ENCODE measurements at regions of chr3 and their contacts with region 1.

Region 1: DNA sequence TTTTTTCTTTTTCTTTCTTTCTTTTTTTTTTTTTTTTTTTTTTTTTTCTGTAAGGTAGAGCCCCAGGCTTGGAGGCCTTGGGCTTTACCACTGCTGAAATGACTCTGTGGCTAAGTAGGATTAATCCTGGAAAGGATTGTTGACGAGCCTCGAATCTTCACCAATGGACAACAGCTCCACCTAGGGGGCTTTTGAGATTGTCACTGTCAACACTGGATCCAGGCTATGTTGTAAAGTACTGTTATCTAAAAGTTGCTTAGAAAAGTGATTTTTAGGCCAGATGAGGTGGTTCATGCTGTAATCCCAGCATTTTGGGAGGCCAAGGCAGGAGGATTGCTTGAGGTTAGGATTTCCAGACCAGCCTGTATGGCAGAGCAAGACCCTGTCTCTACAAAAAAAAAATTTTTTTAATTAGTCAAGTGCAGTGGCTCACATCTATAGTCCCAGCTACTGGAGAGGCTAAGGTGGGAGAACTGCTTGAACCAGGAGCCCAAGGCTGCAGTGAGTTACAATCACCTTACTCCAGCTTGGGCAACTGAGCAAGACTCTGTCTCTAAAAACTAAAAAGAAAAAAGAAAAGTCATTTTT is 41.6 kb downstream of the KLHL18 start:
- DNase-seq: peak; percentile 50
- H3K4me3 ChIP-seq: no peak overlapping the region
- H3K27ac ChIP-seq: no peak overlapping the region
- H3K27me3 ChIP-seq: no peaks in the 10 kb centered on the region
- CTCF ChIP-seq: peak; percentile 80

Region 2: DNA sequence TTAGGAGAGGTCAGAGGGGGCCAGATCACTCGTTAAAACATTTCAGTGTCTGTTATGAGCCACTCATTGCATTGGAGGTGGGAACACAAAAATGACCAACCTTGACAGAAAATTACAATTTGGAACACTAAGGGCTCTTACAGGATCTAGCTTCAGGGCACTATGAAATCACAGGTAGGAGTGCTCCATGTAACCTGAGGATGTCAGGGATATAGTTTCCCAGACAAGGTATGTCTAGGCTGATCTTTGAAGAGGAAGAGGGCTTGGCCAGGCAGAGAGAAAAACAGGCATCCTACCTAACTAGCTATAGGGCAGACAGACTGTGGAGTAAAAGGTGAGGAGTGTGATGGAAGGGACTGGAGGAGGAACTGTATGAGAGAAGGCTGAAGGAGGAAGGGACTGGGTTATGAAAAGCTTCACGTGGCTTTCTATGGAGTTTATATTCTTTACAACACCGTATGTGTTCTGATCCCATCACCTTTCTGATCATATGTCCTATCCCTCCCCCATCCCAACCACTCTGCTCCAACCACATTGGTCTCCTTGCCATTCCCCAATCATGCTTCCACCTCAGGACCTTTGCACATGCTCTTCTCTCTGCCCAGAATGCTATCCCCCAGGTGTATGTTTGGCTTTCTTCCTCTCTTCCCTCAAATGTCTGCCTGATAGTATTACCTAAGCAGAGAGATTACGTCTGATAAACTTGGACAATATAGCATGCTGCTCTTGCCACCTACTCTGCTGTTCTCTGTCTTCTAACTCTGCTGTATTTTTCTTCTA is 1204.5 kb before region 1 on chr3:
- CTCF ChIA-PET with region 1: interaction called, 10 read pairs
- POLR2A ChIA-PET with region 1: no interaction called
- DNase-seq: no peak
- H3K4me3 ChIP-seq: no peak overlapping the region
- H3K27ac ChIP-seq: no peak overlapping the region
- H3K27me3 ChIP-seq: peaks cover 6% of the 10 kb centered on the region
- CTCF ChIP-seq: no peak

Region 3: GRCh38 chr3:46909535-46910442 is 414.6 kb before region 1 on chr3:
- CTCF ChIA-PET with region 1: interaction called, 10 read pairs
- POLR2A ChIA-PET with region 1: no interaction called
- DNase-seq: peak; percentile 53
- H3K4me3 ChIP-seq: no peak overlapping the region
- H3K27ac ChIP-seq: no peak overlapping the region
- H3K27me3 ChIP-seq: no peaks in the 10 kb centered on the region
- CTCF ChIP-seq: peak; percentile 96

Region 4: DNA sequence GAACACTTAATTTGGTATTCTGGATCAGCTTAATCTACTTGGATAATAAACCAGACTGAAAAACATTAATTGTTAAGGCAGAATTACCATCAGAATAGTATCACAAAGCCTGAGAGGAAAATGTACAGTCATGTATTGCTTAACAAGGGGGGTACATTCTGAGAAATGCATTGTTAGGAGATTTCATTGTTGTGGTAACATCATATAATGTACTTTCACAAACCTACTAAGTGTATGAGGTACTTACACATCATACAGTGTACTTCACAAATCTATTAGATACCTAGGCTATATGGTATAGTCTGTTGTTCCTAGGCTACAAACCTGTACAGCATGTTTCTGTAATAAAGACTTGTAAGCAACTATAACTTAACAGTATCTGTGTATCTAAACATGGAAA is 276.7 kb before region 1 on chr3:
- CTCF ChIA-PET with region 1: interaction called, 10 read pairs
- POLR2A ChIA-PET with region 1: no interaction called
- DNase-seq: no peak
- H3K4me3 ChIP-seq: no peak overlapping the region
- H3K27ac ChIP-seq: no peak overlapping the region
- H3K27me3 ChIP-seq: no peaks in the 10 kb centered on the region
- CTCF ChIP-seq: no peak

Region 5: GRCh38 chr3:47108546-47108945 is 215.8 kb before region 1 on chr3:
- CTCF ChIA-PET with region 1: interaction called, 10 read pairs
- POLR2A ChIA-PET with region 1: no interaction called
- DNase-seq: peak; percentile 15
- H3K4me3 ChIP-seq: no peak overlapping the region
- H3K27ac ChIP-seq: no peak overlapping the region
- H3K27me3 ChIP-seq: no peaks in the 10 kb centered on the region
- CTCF ChIP-seq: no peak

Region 6: DNA sequence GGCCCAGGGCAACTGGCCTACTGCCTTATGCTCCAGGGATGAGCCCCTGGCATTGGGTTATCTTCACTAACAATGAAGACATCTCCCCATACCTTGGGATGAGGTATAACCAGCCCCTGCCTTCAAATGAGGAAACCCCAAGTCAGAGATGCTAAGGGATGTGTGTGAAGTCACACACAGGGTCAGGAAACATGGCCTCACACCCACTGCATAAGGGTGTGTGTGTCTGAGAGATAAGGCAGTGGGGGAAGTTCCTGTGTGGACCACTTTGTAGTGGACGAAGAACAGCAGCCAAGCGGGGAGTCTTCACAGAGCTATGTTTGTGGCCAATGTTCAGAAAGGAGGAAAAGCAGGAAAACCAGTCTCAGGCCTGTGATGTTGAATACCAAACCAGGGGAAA is 178.7 kb after region 1 on chr3:
- CTCF ChIA-PET with region 1: no interaction called
- POLR2A ChIA-PET with region 1: interaction called, 10 read pairs
- DNase-seq: no peak
- H3K4me3 ChIP-seq: no peak overlapping the region
- H3K27ac ChIP-seq: no peak overlapping the region
- H3K27me3 ChIP-seq: no peaks in the 10 kb centered on the region
- CTCF ChIP-seq: no peak